Panc1 (cell line): ENCODE measurements at regions of chr9 and their contacts with region 1.

Region 1: DNA sequence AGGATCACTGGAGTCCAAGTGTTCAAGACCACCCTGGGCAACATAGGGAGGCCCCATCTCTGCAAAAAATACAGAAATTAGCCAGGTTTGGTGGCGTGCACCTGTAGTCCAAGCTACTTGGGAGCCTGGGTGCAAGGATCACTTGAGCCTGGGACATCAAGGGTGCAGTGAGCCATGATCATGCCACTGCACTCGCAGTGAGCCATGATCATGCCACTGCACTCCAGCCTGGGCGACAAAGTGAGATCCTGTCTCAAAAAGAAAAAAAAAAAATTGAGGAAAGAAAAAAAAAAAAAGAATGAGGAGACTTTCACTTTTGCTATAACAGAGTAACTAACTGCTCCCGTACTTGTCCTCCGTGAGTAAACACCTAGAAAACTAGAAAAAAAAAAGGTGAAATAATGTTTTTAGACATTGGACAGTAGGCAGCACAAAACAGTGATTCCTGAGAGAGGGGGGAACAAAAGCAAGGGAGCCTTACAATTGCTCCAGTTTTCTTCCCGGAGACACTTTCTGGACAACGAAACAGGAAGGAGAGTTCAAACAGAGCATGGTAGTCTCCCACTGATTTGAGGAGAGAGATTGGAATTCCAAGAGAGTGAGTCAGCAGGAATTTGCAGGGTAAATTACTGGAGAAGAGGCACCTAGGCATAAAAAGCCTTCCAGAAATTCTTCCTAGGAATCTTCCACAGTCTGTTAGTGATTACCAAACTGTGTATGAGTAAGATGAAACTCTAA is 6.9 kb upstream of the ZBTB5 start:
- DNase-seq: peak; percentile 97
- ATAC-seq: peak; percentile 94
- H3K4me3 ChIP-seq: peak overlapping the region; percentile 32 to 66
- H3K27ac ChIP-seq: peak overlapping the region; percentile 98
- H3K4me1 ChIP-seq: peaks cover 28% of the 10 kb centered on the region
- H3K27me3 ChIP-seq: no peaks in the 10 kb centered on the region
- CTCF ChIP-seq: no peak

Region 2: GRCh38 chr9:37485389-37486219 is 13.5 kb after region 1 on chr9 and contains the start of gene POLR1E:
- CTCF ChIA-PET with region 1: no interaction called
- POLR2A ChIA-PET with region 1: no interaction called
- in situ Hi-C with region 1: no loop called
- intact Hi-C with region 1: no loop called
- DNase-seq: peak; percentile 75
- ATAC-seq: peak; percentile 98
- H3K4me3 ChIP-seq: peak within 1 kb of the TSS; percentile 67 to 96
- H3K27ac ChIP-seq: peak within 1 kb of the TSS; percentile 91
- H3K4me1 ChIP-seq: peaks cover 35% of the 10 kb centered on the region
- H3K27me3 ChIP-seq: no peaks in the 10 kb centered on the region
- CTCF ChIP-seq: no peak
- total RNA-seq, gene POLR1E: 93.8 TPM

Region 3: GRCh38 chr9:37550781-37551180 is 78.7 kb after region 1 on chr9:
- CTCF ChIA-PET with region 1: no interaction called
- POLR2A ChIA-PET with region 1: no interaction called
- in situ Hi-C with region 1: no loop called
- intact Hi-C with region 1: no loop called
- DNase-seq: no peak
- ATAC-seq: no peak
- H3K4me3 ChIP-seq: no peak overlapping the region
- H3K27ac ChIP-seq: no peak overlapping the region
- H3K4me1 ChIP-seq: peaks cover 16% of the 10 kb centered on the region
- H3K27me3 ChIP-seq: no peaks in the 10 kb centered on the region
- CTCF ChIP-seq: no peak

Region 4: GRCh38 chr9:37639109-37639762 is 167.1 kb after region 1 on chr9:
- CTCF ChIA-PET with region 1: no interaction called
- POLR2A ChIA-PET with region 1: no interaction called
- in situ Hi-C with region 1: no loop called
- intact Hi-C with region 1: no loop called
- DNase-seq: no peak
- ATAC-seq: no peak
- H3K4me3 ChIP-seq: no peak overlapping the region
- H3K27ac ChIP-seq: no peak overlapping the region
- H3K4me1 ChIP-seq: no peaks in the 10 kb centered on the region
- H3K27me3 ChIP-seq: peaks cover 41% of the 10 kb centered on the region
- CTCF ChIP-seq: no peak

Region 5: GRCh38 chr9:37746848-37747753 is 275.0 kb after region 1 on chr9:
- CTCF ChIA-PET with region 1: no interaction called
- POLR2A ChIA-PET with region 1: no interaction called
- in situ Hi-C with region 1: no loop called
- intact Hi-C with region 1: loop called (anchors 10 kb)
- DNase-seq: peak; percentile 62
- ATAC-seq: peak; percentile 93
- H3K4me3 ChIP-seq: no peak overlapping the region
- H3K27ac ChIP-seq: no peak overlapping the region
- H3K4me1 ChIP-seq: peaks cover 5% of the 10 kb centered on the region; the same call in 1 of the 2 replicates
- H3K27me3 ChIP-seq: no peaks in the 10 kb centered on the region
- CTCF ChIP-seq: no peak